CD8-positive, alpha-beta T cell (primary cell): ENCODE measurements at regions of chr1 and their contacts with region 1.

Region 1: GRCh38 chr1:207058878-207059867 is 6.1 kb downstream of the PFKFB2 start:
- DNase-seq: no peak
- ATAC-seq: no peak
- H3K4me3 ChIP-seq: no peak overlapping the region
- H3K4me3 Mint-ChIP-seq: no peak overlapping the region
- H3K27ac ChIP-seq: no peak overlapping the region
- H3K27ac Mint-ChIP-seq: no peak overlapping the region
- H3K4me1 ChIP-seq: no peaks in the 10 kb centered on the region
- H3K4me1 Mint-ChIP-seq: peaks cover 2% of the 10 kb centered on the region
- H3K27me3 ChIP-seq: no peaks in the 10 kb centered on the region
- H3K27me3 Mint-ChIP-seq: no peaks in the 10 kb centered on the region
- CTCF ChIP-seq: no peak

Region 2: DNA sequence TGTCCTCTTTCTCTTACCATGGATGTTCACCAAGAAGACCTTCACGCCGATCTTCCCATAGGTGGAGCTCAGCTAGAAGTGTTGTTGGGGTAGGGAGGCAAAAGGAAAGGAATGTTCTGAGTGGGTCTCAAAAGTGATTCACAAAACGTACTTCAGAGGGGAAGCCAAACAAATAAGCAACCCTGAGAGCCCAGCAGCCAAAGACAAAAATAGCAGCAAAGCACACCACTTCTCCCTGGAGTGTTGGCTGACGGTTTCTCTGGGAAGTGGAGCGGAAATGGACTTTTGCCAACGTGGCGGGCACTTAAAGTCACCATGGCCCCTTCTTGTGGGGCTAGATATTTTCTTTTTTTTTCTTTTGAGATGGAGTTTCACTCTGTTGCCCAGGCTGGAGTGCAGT is 1139.0 kb before region 1 on chr1:
- CTCF ChIA-PET with region 1: no interaction called
- POLR2A ChIA-PET with region 1: no interaction called
- intact Hi-C with region 1: no loop called
- DNase-seq: no peak
- ATAC-seq: no peak
- H3K4me3 ChIP-seq: no peak overlapping the region
- H3K4me3 Mint-ChIP-seq: no peak overlapping the region
- H3K27ac ChIP-seq: no peak overlapping the region
- H3K27ac Mint-ChIP-seq: no peak overlapping the region
- H3K4me1 ChIP-seq: no peaks in the 10 kb centered on the region
- H3K4me1 Mint-ChIP-seq: no peaks in the 10 kb centered on the region
- H3K27me3 ChIP-seq: no peaks in the 10 kb centered on the region
- H3K27me3 Mint-ChIP-seq: peaks cover 10% of the 10 kb centered on the region
- CTCF ChIP-seq: no peak

Region 3: GRCh38 chr1:207045466-207045865 is 13.7 kb before region 1 on chr1:
- CTCF ChIA-PET with region 1: interaction called, 13 read pairs
- POLR2A ChIA-PET with region 1: interaction called, 3 read pairs
- intact Hi-C with region 1: loop called in 1 of 2 experiments (anchors 1 kb)
- DNase-seq: no peak
- ATAC-seq: no peak
- H3K4me3 ChIP-seq: no peak overlapping the region
- H3K4me3 Mint-ChIP-seq: no peak overlapping the region
- H3K27ac ChIP-seq: no peak overlapping the region
- H3K27ac Mint-ChIP-seq: no peak overlapping the region
- H3K4me1 ChIP-seq: peaks cover 19% of the 10 kb centered on the region
- H3K4me1 Mint-ChIP-seq: peaks cover 66% of the 10 kb centered on the region
- H3K27me3 ChIP-seq: no peaks in the 10 kb centered on the region
- H3K27me3 Mint-ChIP-seq: no peaks in the 10 kb centered on the region
- CTCF ChIP-seq: no peak